ENCODE measurements at regions of chr6 and their contacts with region 1.

Region 1: GRCh38 chr6:31546962-31547726 is at the start of gene NFKBIL1:
- DNase-seq: peak; percentile 97
- H3K4me3 ChIP-seq: peak within 1 kb of the TSS; percentile 34 to 73 (median 40)
- H3K27ac ChIP-seq: peak within 1 kb of the TSS; percentile 69 to 92 (median 87)
- H3K4me1 ChIP-seq: peaks cover 23 to 76% (median 62%) of the 10 kb centered on the region in 6 donors
- H3K27me3 ChIP-seq: no peaks in the 10 kb centered on the region
- CTCF ChIP-seq: peak in 2 of 11 experiments; percentile 7 to 11
- POLR2A ChIP-seq: no peak
- total RNA-seq, gene NFKBIL1: 11.0 to 36.3 (median 19.4) TPM

Region 2: GRCh38 chr6:30981942-30982772 is 565.0 kb before region 1 on chr6:
- intact Hi-C with region 1: no loop called
- DNase-seq: no peak
- H3K4me3 ChIP-seq: no peak overlapping the region
- H3K27ac ChIP-seq: no peak overlapping the region
- H3K4me1 ChIP-seq: peaks cover 0 to 7% (median 0%) of the 10 kb centered on the region in 6 donors
- H3K27me3 ChIP-seq: peaks cover 0 to 43% (median 0%) of the 10 kb centered on the region in 7 donors
- CTCF ChIP-seq: no peak
- POLR2A ChIP-seq: no peak

Region 3: GRCh38 chr6:31597006-31597405 is 49.9 kb after region 1 on chr6:
- intact Hi-C with region 1: loop called (anchors 2 kb)
- DNase-seq: no peak
- H3K4me3 ChIP-seq: no peak overlapping the region
- H3K27ac ChIP-seq: peak overlapping the region in 4 of 8 donors; percentile 5 to 50 (median 40)
- H3K4me1 ChIP-seq: peaks cover 9 to 70% (median 39%) of the 10 kb centered on the region in 6 donors
- H3K27me3 ChIP-seq: no peaks in the 10 kb centered on the region
- CTCF ChIP-seq: peak; percentile 13 to 79 (median 69)
- POLR2A ChIP-seq: no peak